ENCODE measurements at regions of chr17 and their contacts with region 1.

Region 1: GRCh38 chr17:81954131-81955057 is 6.6 kb downstream of the NOTUM start:
- DNase-seq: no peak
- H3K4me3 ChIP-seq: no peak overlapping the region
- H3K27ac ChIP-seq: no peak overlapping the region
- H3K4me1 ChIP-seq: peaks cover 6% of the 10 kb centered on the region; the same call in 1 of the 2 replicates
- H3K27me3 ChIP-seq: no peaks in the 10 kb centered on the region
- CTCF ChIP-seq: no peak

Region 2: GRCh38 chr17:81902023-81902652 is 52.3 kb before region 1 on chr17 and contains the start of gene NPB:
- CTCF ChIA-PET with region 1: interaction called, 20 read pairs
- POLR2A ChIA-PET with region 1: no interaction called
- intact Hi-C with region 1: no loop called
- DNase-seq: no peak
- H3K4me3 ChIP-seq: no peak within 1 kb of the TSS
- H3K27ac ChIP-seq: no peak within 1 kb of the TSS
- H3K4me1 ChIP-seq: peaks cover 27% of the 10 kb centered on the region
- H3K27me3 ChIP-seq: no peaks in the 10 kb centered on the region
- CTCF ChIP-seq: no peak
- total RNA-seq, gene NPB: 0.83 and 1.1 TPM in 2 replicates